ENCODE measurements at regions of chr11 and their contacts with region 1.

Region 1: GRCh38 chr11:5092821-5093585 is 23.6 kb downstream of the OR52E1 start:
- DNase-seq: no peak
- H3K4me3 ChIP-seq: no peak overlapping the region
- CTCF ChIP-seq: no peak
- POLR2A ChIP-seq: no peak

Region 2: GRCh38 chr11:5059391-5059790 is 33.6 kb before region 1 on chr11 and contains the start of gene OR52E2:
- intact Hi-C with region 1: loop called (anchors 2 kb)
- DNase-seq: no peak
- H3K4me3 ChIP-seq: no peak within 1 kb of the TSS
- CTCF ChIP-seq: no peak
- POLR2A ChIP-seq: no peak
- total RNA-seq, gene OR52E2: 2.7 TPM in 1 of 4 donors, not detected in the others

Measured in lower leg skin (tissue), 4 donors.